ENCODE measurements at regions of chr5 and their contacts with region 1.

Region 1: GRCh38 chr5:164504141-164504772 is 998.8 kb downstream of the MAT2B start:
- ATAC-seq: peak; percentile 23 to 62 (median 40)
- H3K4me3 ChIP-seq: no peak overlapping the region
- H3K27ac ChIP-seq: no peak overlapping the region
- H3K4me1 ChIP-seq: no peaks in the 10 kb centered on the region

Region 2: DNA sequence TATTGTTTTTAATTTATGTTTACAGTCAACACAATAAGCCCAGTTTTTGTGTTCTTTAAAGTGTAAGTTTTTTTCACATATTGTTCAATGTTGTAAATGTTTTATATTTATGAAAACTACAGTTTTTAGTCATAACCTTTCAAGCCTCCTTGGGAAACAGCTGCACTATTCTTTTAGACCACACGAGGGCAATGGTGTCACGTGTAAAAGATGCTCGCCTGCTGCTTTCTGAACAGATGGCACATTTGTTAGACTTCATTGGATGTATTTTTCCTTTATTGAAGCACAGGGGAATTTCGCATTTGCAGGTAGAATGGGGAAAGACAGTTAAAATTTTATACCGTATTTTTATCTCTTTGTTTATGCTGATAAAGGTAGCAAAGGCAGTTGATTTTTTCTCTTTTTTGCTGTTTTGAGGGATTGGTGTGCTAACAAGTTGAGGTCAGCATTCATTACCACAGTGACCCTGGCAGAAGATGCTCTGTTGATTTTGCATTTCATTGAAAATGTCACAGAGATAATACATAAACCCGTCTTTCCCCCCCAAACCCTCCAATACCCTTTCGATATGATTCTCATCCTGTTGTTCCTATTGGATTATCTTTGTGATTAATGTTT is 939.8 kb before region 1 on chr5:
- in situ Hi-C with region 1: loop called in 5 of 9 experiments (anchors 25 kb)
- ATAC-seq: peak; percentile 27 to 67 (median 50)
- H3K4me3 ChIP-seq: no peak overlapping the region
- H3K27ac ChIP-seq: peak overlapping the region in 1 of 2 donors; percentile 6
- H3K4me1 ChIP-seq: peaks cover 22 to 38% of the 10 kb centered on the region in 2 donors

Region 3: GRCh38 chr5:163706053-163706771 is 798.0 kb before region 1 on chr5:
- in situ Hi-C with region 1: loop called in 1 of 9 experiments (anchors 25 kb)
- ATAC-seq: no peak
- H3K4me3 ChIP-seq: no peak overlapping the region
- H3K27ac ChIP-seq: no peak overlapping the region
- H3K4me1 ChIP-seq: peaks cover 0 to 5% of the 10 kb centered on the region in 2 donors

Region 4: GRCh38 chr5:164013077-164013670 is 491.1 kb before region 1 on chr5:
- in situ Hi-C with region 1: loop called in 2 of 9 experiments (anchors 25 kb)
- ATAC-seq: peak in 5 of 8 experiments; percentile 30 to 79 (median 60)
- H3K4me3 ChIP-seq: no peak overlapping the region
- H3K27ac ChIP-seq: no peak overlapping the region
- H3K4me1 ChIP-seq: peaks cover 7 to 22% of the 10 kb centered on the region in 2 donors

Region 5: GRCh38 chr5:164048359-164048926 is 455.8 kb before region 1 on chr5:
- in situ Hi-C with region 1: loop called in 2 of 9 experiments (anchors 25 kb)
- ATAC-seq: peak in 5 of 8 experiments; percentile 46 to 89 (median 56)
- H3K4me3 ChIP-seq: no peak overlapping the region
- H3K27ac ChIP-seq: no peak overlapping the region
- H3K4me1 ChIP-seq: peaks cover 5 to 17% of the 10 kb centered on the region in 2 donors

Region 6: DNA sequence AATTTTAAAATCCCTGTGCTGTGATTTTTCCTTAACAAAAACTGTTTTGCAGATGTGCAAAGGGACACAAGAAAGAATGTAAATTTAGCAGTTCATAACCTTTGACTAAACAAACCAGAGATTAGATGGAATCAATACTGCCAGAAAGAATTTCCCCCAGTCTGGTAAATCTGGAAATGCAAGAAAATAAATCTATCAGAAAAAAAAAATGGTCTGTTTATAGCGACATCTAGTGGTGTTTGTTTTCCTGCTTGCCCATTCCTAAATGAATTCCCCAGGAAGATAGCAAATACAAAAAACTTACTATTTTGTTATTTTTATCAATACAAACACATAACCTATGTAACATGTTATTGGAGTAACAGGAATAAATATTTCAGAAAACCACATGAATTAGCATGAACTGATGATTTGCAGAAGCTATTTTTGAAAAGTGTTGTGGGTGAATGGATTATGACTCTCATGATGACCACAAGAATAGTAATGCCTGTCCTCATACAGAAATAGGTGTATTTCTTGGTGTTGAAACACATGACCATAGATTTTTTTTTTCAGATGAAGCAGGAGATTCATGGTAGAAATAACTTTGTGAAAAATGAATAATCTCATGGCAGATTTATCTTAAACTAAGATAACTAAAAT is 705.0 kb after region 1 on chr5:
- in situ Hi-C with region 1: loop called in 1 of 9 experiments (anchors 25 kb)
- ATAC-seq: no peak
- H3K4me3 ChIP-seq: no peak overlapping the region
- H3K27ac ChIP-seq: no peak overlapping the region
- H3K4me1 ChIP-seq: peaks cover 3 to 4% of the 10 kb centered on the region in 2 donors